ENCODE measurements at regions of chr3 and their contacts with region 1.

Region 1: GRCh38 chr3:185983495-185984141 is 45.8 kb upstream of the TRA2B start:
- DNase-seq: peak in 31 of 35 experiments; percentile 3 to 79 (median 34)
- ATAC-seq: peak; percentile 53 to 74 (median 72)
- H3K4me3 ChIP-seq: no peak overlapping the region
- H3K4me3 Mint-ChIP-seq: no peak overlapping the region
- H3K27ac ChIP-seq: no peak overlapping the region
- H3K27ac Mint-ChIP-seq: no peak overlapping the region
- H3K4me1 ChIP-seq: peaks cover 0 to 8% of the 10 kb centered on the region in 2 experiments
- H3K4me1 Mint-ChIP-seq: peaks cover 4 to 6% (median 4%) of the 10 kb centered on the region in 3 donors
- H3K27me3 ChIP-seq: peaks cover 0 to 10% of the 10 kb centered on the region in 2 experiments
- H3K27me3 Mint-ChIP-seq: peaks cover 8 to 14% of the 10 kb centered on the region in 2 donors

Region 2: DNA sequence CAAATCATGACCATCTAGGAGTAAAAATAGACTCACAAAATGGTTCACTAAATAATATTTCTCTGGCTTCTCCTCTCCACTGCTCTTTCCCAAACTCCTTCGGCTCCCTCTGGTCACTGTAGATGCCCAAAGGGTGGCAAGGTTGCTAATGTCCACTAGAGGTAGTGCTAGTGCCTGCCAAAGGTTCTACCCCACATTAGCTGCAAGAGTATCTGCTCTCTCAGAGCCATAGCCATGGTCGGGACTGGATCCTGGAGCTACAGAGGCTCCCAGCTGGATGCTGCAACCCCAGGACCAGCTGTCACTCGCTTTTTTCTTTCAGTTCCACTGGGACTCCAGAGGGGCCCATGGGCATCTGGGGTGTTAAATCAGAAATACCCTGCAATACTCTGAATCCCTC is 1943.6 kb before region 1 on chr3:
- CTCF ChIA-PET with region 1: no interaction called
- POLR2A ChIA-PET with region 1: interaction called in 1 of 2 experiments, 16 read pairs
- DNase-seq: no peak
- ATAC-seq: no peak
- H3K4me3 ChIP-seq: no peak overlapping the region
- H3K4me3 Mint-ChIP-seq: no peak overlapping the region
- H3K27ac ChIP-seq: no peak overlapping the region
- H3K27ac Mint-ChIP-seq: no peak overlapping the region
- H3K4me1 ChIP-seq: no peaks in the 10 kb centered on the region
- H3K4me1 Mint-ChIP-seq: no peaks in the 10 kb centered on the region
- H3K27me3 ChIP-seq: peaks cover 0 to 3% of the 10 kb centered on the region in 2 experiments
- H3K27me3 Mint-ChIP-seq: peaks cover 0 to 2% of the 10 kb centered on the region in 2 donors

Region 3: DNA sequence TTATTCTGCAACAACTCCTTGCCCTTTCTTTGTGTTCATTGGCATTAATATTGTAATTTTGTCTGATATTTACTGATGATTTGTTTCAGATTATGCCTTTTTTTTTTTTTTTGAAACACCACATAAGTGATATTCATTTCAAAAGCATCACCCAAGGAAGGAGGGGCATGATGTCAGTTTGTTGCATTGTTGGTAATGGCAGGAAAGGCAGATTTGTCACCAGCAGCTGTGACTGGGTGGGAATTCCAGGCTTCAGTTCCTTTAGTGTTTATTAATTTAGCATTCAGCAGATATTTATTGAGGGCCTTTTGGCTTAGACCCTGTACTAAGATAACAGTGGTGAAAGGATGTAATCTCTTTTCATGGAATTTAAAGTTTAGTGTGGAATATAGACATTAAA is 378.1 kb before region 1 on chr3:
- CTCF ChIA-PET with region 1: no interaction called
- POLR2A ChIA-PET with region 1: no interaction called
- DNase-seq: no peak
- ATAC-seq: no peak
- H3K4me3 ChIP-seq: no peak overlapping the region
- H3K4me3 Mint-ChIP-seq: no peak overlapping the region
- H3K27ac ChIP-seq: no peak overlapping the region
- H3K27ac Mint-ChIP-seq: no peak overlapping the region
- H3K4me1 ChIP-seq: no peaks in the 10 kb centered on the region
- H3K4me1 Mint-ChIP-seq: peaks cover 0 to 8% (median 4%) of the 10 kb centered on the region in 3 donors
- H3K27me3 ChIP-seq: no peaks in the 10 kb centered on the region
- H3K27me3 Mint-ChIP-seq: no peaks in the 10 kb centered on the region

Region 4: GRCh38 chr3:186540221-186540834 is 556.7 kb after region 1 on chr3:
- CTCF ChIA-PET with region 1: interaction called, 51 to 56 read pairs
- POLR2A ChIA-PET with region 1: interaction called, 3 to 4 read pairs
- DNase-seq: peak; percentile 60 to 93 (median 79)
- ATAC-seq: peak; percentile 86 to 97 (median 95)
- H3K4me3 ChIP-seq: no peak overlapping the region
- H3K4me3 Mint-ChIP-seq: no peak overlapping the region
- H3K27ac ChIP-seq: no peak overlapping the region
- H3K27ac Mint-ChIP-seq: peak overlapping the region; percentile 4 to 68
- H3K4me1 ChIP-seq: peaks cover 3 to 6% of the 10 kb centered on the region in 2 experiments
- H3K4me1 Mint-ChIP-seq: peaks cover 9 to 15% (median 9%) of the 10 kb centered on the region in 3 donors
- H3K27me3 ChIP-seq: no peaks in the 10 kb centered on the region
- H3K27me3 Mint-ChIP-seq: no peaks in the 10 kb centered on the region

Region 5: GRCh38 chr3:186821429-186822367 is 838.1 kb after region 1 on chr3:
- CTCF ChIA-PET with region 1: interaction called, 3 to 10 read pairs
- POLR2A ChIA-PET with region 1: no interaction called
- DNase-seq: peak in 2 of 35 experiments; percentile 14 to 77
- ATAC-seq: peak in 1 of 4 experiments; percentile 48
- H3K4me3 ChIP-seq: no peak overlapping the region
- H3K4me3 Mint-ChIP-seq: no peak overlapping the region
- H3K27ac ChIP-seq: no peak overlapping the region
- H3K27ac Mint-ChIP-seq: no peak overlapping the region
- H3K4me1 ChIP-seq: peaks cover 2 to 16% of the 10 kb centered on the region in 2 experiments
- H3K4me1 Mint-ChIP-seq: peaks cover 12 to 14% (median 12%) of the 10 kb centered on the region in 3 donors
- H3K27me3 ChIP-seq: peaks cover 0 to 25% of the 10 kb centered on the region in 2 experiments
- H3K27me3 Mint-ChIP-seq: peaks cover 18 to 22% of the 10 kb centered on the region in 2 donors